Activated CD4-positive, alpha-beta T cell treated with anti-CD3 and anti-CD28 coated beads for 36 hours (primary cell): ENCODE measurements at regions of chr6 and their contacts with region 1.

Region 1: DNA sequence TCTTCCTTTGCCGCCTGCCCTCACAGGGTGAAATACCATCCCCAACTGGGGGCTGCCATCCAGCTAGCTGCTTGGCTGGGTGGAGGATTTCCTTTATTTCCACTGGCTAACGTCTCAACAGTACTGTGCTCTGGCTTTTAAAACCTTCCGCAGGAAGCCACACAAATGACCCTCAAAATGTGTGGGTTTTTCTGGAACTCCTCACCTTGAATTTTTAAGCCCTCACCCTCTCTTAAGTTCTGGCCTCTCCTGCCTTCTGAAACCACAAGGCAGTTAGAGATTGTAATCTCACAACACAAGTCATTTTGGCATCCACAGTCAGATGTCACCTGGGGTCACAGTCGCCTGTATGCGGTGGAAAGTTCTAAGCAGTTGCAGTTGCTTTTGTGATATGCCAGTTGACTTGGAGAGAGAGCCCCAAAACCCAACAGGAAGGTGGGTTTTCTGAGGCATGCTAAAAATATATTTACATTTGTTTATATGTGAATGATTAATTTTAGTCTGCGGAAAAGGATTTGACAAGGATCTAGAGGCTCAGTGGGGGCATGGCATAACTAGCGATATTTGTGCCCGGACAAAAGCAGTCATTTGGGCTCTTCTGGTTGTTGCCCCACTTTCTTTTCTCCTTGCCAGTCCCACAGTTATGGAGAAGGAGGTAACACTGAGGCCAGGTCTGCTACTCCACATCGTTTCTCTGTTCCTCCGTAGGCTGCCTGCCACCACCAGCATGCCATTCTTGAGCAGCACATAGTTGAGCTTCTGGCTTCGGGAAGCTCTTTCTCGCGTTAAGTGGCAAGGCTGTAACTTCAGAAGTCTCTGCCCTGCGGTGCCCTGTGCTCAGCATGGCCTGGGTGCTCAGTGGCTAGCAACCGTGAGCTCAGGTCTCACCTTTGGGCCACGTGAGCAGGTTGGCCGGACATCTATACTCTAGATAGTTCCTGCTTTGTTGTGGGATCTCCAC is 335.3 kb downstream of the CD83 start:
- DNase-seq: peak; percentile 85
- ATAC-seq: peak; percentile 70
- H3K4me3 Mint-ChIP-seq: peak overlapping the region; percentile 26
- H3K27ac Mint-ChIP-seq: peak overlapping the region; percentile 83
- H3K4me1 Mint-ChIP-seq: peaks cover 89% of the 10 kb centered on the region
- H3K27me3 Mint-ChIP-seq: no peaks in the 10 kb centered on the region

Region 2: DNA sequence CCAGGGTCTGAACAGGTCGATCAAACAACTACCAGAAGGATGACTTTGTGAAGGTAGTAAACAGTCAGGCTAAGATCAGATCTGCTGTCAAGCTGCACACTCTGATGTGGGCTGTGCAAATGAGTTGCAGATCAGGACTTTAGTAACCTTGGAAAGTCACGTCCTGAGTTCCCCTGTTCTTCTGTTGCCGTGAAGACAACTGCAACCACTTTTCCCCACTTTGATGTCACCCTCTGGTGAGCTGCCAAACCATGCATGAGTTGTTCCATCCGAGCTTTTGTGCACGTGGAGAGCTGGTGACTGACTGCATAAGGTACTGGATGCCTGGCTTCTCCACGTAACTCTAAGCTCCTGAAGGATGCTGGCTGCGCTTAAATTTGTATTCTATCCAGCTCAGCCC is 224.3 kb before region 1 on chr6:
- CTCF ChIA-PET with region 1: no interaction called
- POLR2A ChIA-PET with region 1: interaction called, 6 read pairs
- intact Hi-C with region 1: loop called in 1 of 2 experiments (anchors 5 kb)
- DNase-seq: peak; percentile 83
- ATAC-seq: peak; percentile 87
- H3K4me3 Mint-ChIP-seq: no peak overlapping the region
- H3K27ac Mint-ChIP-seq: peak overlapping the region; percentile 11
- H3K4me1 Mint-ChIP-seq: peaks cover 36% of the 10 kb centered on the region
- H3K27me3 Mint-ChIP-seq: no peaks in the 10 kb centered on the region

Region 3: GRCh38 chr6:14371530-14371929 is 81.3 kb before region 1 on chr6:
- CTCF ChIA-PET with region 1: interaction called, 3 read pairs
- POLR2A ChIA-PET with region 1: no interaction called
- intact Hi-C with region 1: loop called in 1 of 2 experiments (anchors 5 kb)
- DNase-seq: no peak
- ATAC-seq: peak; percentile 20
- H3K4me3 Mint-ChIP-seq: peak overlapping the region; percentile 24
- H3K27ac Mint-ChIP-seq: peak overlapping the region; percentile 37
- H3K4me1 Mint-ChIP-seq: peaks cover 40% of the 10 kb centered on the region
- H3K27me3 Mint-ChIP-seq: peaks cover 2% of the 10 kb centered on the region

Region 4: DNA sequence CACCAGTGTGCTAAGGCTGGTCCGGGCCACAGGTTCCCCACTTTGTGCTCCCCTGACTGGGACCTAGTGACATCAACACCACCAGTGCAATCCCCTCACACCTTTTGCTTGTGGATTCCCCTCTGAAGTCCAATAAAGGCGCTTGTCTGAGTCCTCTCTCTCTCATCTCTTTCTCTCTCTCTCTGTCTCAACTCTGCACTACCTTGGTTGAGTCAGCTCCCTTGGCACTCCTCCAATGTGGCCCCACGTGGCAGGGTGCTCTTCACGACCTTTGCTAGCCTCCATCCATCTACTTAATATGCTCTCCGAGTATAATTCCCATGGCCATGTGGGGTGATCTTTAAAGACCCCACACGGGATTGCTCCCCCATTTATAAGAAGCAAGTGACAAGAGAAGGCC is 49.7 kb after region 1 on chr6:
- CTCF ChIA-PET with region 1: no interaction called
- POLR2A ChIA-PET with region 1: no interaction called
- intact Hi-C with region 1: no loop called
- DNase-seq: peak; percentile 61
- ATAC-seq: peak; percentile 69
- H3K4me3 Mint-ChIP-seq: no peak overlapping the region
- H3K27ac Mint-ChIP-seq: peak overlapping the region; percentile 48
- H3K4me1 Mint-ChIP-seq: peaks cover 23% of the 10 kb centered on the region
- H3K27me3 Mint-ChIP-seq: no peaks in the 10 kb centered on the region

Region 5: GRCh38 chr6:14542670-14543366 is 90.0 kb after region 1 on chr6:
- CTCF ChIA-PET with region 1: no interaction called
- POLR2A ChIA-PET with region 1: interaction called, 3 read pairs
- intact Hi-C with region 1: loop called in 1 of 2 experiments (anchors 5 kb)
- DNase-seq: peak; percentile 90
- ATAC-seq: peak; percentile 99
- H3K4me3 Mint-ChIP-seq: no peak overlapping the region
- H3K27ac Mint-ChIP-seq: peak overlapping the region; percentile 79
- H3K4me1 Mint-ChIP-seq: peaks cover 41% of the 10 kb centered on the region
- H3K27me3 Mint-ChIP-seq: peaks cover 2% of the 10 kb centered on the region

Region 6: GRCh38 chr6:14660806-14661579 is 208.1 kb after region 1 on chr6:
- CTCF ChIA-PET with region 1: no interaction called
- POLR2A ChIA-PET with region 1: no interaction called
- intact Hi-C with region 1: loop called (anchors 5 kb)
- DNase-seq: peak; percentile 66
- ATAC-seq: peak; percentile 76
- H3K4me3 Mint-ChIP-seq: no peak overlapping the region
- H3K27ac Mint-ChIP-seq: no peak overlapping the region
- H3K4me1 Mint-ChIP-seq: peaks cover 22% of the 10 kb centered on the region
- H3K27me3 Mint-ChIP-seq: no peaks in the 10 kb centered on the region